Upper lobe of right lung (tissue), 1 donor: ENCODE measurements at regions of chr14 and their contacts with region 1.

Region 1: DNA sequence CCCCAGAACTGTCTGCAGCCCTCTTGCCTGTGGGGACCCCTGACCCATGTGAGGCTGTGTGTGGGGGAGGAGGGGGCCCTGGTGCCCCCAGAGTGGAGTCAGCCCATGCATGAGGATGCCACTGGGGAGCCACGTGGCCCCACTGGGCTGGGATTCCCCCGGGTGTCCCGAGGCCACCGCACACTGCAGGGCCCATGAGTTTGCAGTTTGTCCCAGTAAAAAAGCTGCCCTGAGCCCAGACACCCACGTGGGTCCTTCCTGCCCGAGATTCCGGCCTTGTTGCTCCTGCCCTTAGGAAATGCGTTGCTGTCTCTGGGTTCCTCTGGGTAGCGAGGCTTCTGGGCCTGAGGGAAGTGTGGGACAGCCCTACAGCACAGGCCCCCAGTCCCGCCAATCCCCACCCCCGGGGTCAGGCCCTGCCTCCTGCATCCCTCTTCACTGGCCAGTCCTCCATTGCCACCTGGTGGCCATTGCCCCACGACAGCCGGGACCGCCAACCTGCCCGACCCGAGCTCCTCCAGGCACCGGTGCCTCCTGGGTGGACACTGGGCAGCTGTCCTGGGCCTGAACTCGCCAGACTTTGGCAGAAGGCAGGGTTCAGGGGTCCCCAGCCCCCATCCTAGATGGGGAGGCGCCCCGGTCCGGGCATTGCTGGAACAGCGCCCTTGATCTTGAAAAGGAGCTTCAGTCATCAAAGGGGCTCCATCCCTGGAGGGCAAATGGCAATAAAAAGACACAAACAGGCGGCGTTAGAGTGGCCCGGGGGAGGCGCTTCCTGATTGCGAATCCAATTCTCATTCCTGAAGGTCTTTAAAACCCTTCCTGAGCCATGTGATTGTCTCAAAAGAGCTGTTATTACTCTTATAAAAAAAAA is 15.6 kb upstream of the C14orf180 start:
- DNase-seq: peak; percentile 85
- ATAC-seq: peak; percentile 72
- H3K4me3 ChIP-seq: no peak overlapping the region
- H3K27ac ChIP-seq: no peak overlapping the region
- H3K4me1 ChIP-seq: no peaks in the 10 kb centered on the region
- H3K27me3 ChIP-seq: peaks cover 40% of the 10 kb centered on the region
- CTCF ChIP-seq: peak; percentile 76

Region 2: DNA sequence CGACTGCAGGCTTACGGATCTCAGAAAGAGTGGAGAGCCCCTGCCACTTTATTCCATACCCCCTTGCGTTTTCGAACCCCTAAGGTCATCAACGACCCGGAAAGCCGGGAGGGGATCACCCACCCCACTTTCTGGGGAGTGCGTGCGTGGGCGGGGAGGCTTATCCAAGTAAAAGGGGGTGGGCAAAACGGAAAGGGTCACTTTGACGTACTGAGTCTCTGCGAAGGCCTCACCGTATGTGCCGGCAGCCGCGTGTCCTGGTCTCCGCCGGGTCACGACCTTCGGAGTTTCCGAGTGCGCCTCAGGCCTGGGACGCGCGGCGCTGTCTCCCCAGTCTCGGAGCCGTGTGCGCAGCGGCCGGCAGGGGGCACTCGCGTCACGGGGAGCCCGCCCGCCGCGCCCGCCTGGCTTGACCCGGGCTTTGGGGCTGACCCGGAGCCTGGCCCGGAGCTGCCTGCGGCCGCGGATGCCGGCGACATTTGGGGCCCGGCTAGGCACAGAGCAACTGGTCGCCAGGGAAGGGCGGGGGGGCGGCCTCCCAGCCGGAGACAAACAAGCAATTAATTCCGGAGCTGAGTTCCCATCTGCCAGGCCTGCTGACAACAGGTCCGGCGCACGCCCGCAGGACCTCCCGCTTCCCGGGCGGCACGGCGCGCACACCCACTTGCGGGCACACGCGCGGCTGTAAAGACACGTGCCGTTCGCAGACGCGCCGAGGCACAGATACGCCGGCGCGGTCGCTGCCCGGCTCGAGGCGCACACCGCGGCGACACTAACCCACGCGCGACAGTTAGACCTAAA is 426.5 kb before region 1 on chr14:
- intact Hi-C with region 1: loop called (anchors 10 kb)
- DNase-seq: peak; percentile 83
- ATAC-seq: peak; percentile 88
- H3K4me3 ChIP-seq: peak overlapping the region; percentile 55
- H3K27ac ChIP-seq: no peak overlapping the region
- H3K4me1 ChIP-seq: peaks cover 30% of the 10 kb centered on the region
- H3K27me3 ChIP-seq: peaks cover 70% of the 10 kb centered on the region
- CTCF ChIP-seq: peak; percentile 87

Region 3: GRCh38 chr14:104150136-104151027 is 413.6 kb before region 1 on chr14:
- intact Hi-C with region 1: no loop called
- DNase-seq: no peak
- ATAC-seq: no peak
- H3K4me3 ChIP-seq: no peak overlapping the region
- H3K27ac ChIP-seq: no peak overlapping the region
- H3K4me1 ChIP-seq: peaks cover 9% of the 10 kb centered on the region
- H3K27me3 ChIP-seq: no peaks in the 10 kb centered on the region
- CTCF ChIP-seq: no peak